Activated CD4-positive, alpha-beta memory T cell treated with anti-CD3 and anti-CD28 coated beads for 36 hours (primary cell): ENCODE measurements at regions of chr2 and their contacts with region 1.

Region 1: DNA sequence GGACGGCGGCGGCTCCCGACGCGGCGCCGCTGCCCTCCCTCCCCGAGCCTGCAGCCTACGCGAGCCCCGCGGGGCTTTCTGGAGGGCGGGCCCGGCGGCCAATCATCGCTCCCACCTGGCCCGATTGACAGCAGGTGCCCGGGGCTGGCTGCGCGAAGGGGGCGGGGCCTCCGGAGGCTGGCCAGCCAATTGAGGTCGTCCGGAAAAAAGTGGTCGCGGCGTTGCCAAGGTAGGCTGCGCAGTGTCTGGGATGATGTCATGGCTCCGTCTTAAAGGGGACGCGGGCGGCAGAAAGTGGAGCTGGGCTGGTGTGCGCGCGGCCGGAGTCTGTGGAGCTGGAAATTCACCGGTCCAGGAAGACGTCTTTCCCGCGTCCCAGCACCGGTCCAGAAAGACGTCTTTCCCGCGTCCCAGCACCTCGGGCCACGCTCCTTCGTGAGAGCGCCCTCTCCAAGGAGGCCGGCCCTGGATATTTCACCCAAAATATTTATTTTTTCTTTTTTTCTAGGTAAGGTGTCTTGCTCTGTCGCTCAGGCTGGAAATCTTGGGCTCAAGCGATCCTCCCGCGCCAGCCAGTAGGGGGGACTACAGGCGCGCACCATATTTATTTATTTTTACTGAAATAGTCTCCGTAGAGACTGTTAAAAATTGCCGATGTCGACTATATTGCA is at the start of gene ACTR1B:
- DNase-seq: peak; percentile 99
- H3K4me3 Mint-ChIP-seq: peak within 1 kb of the TSS; percentile 91
- H3K27ac Mint-ChIP-seq: peak within 1 kb of the TSS; percentile 95
- H3K4me1 Mint-ChIP-seq: peaks cover 27% of the 10 kb centered on the region
- H3K27me3 Mint-ChIP-seq: no peaks in the 10 kb centered on the region
- total RNA-seq, gene ACTR1B: 113 to 114 TPM

Region 2: GRCh38 chr2:97688062-97688827 is 24.1 kb after region 1 on chr2:
- CTCF ChIA-PET with region 1: interaction called, 5 read pairs
- POLR2A ChIA-PET with region 1: interaction called, 9 read pairs
- intact Hi-C with region 1: loop called (anchors 1 kb)
- DNase-seq: peak; percentile 28
- H3K4me3 Mint-ChIP-seq: peak overlapping the region; percentile 9
- H3K27ac Mint-ChIP-seq: peak overlapping the region; percentile 84
- H3K4me1 Mint-ChIP-seq: peaks cover 13% of the 10 kb centered on the region
- H3K27me3 Mint-ChIP-seq: no peaks in the 10 kb centered on the region

Region 3: GRCh38 chr2:97710596-97711386 is 46.7 kb after region 1 on chr2:
- CTCF ChIA-PET with region 1: interaction called, 15 read pairs
- POLR2A ChIA-PET with region 1: interaction called, 34 read pairs
- intact Hi-C with region 1: loop called (anchors 1 kb)
- DNase-seq: peak; percentile 43
- H3K4me3 Mint-ChIP-seq: no peak overlapping the region
- H3K27ac Mint-ChIP-seq: peak overlapping the region; percentile 58
- H3K4me1 Mint-ChIP-seq: peaks cover 42% of the 10 kb centered on the region
- H3K27me3 Mint-ChIP-seq: no peaks in the 10 kb centered on the region

Region 4: GRCh38 chr2:97740590-97741182 is 76.6 kb after region 1 on chr2:
- CTCF ChIA-PET with region 1: interaction called, 3 read pairs
- POLR2A ChIA-PET with region 1: interaction called, 4 read pairs
- intact Hi-C with region 1: loop called (anchors 5 kb)
- DNase-seq: peak; percentile 58
- H3K4me3 Mint-ChIP-seq: no peak overlapping the region
- H3K27ac Mint-ChIP-seq: no peak overlapping the region
- H3K4me1 Mint-ChIP-seq: peaks cover 46% of the 10 kb centered on the region
- H3K27me3 Mint-ChIP-seq: no peaks in the 10 kb centered on the region

Region 5: GRCh38 chr2:98455494-98455976 is 791.4 kb after region 1 on chr2:
- CTCF ChIA-PET with region 1: no interaction called
- POLR2A ChIA-PET with region 1: no interaction called
- intact Hi-C with region 1: loop called (anchors 5 kb)
- DNase-seq: peak; percentile 60
- H3K4me3 Mint-ChIP-seq: peak overlapping the region; percentile 55
- H3K27ac Mint-ChIP-seq: peak overlapping the region; percentile 84
- H3K4me1 Mint-ChIP-seq: peaks cover 93% of the 10 kb centered on the region
- H3K27me3 Mint-ChIP-seq: no peaks in the 10 kb centered on the region